Motor neuron (in vitro differentiated cells): ENCODE measurements at regions of chr2 and their contacts with region 1.

Region 1: DNA sequence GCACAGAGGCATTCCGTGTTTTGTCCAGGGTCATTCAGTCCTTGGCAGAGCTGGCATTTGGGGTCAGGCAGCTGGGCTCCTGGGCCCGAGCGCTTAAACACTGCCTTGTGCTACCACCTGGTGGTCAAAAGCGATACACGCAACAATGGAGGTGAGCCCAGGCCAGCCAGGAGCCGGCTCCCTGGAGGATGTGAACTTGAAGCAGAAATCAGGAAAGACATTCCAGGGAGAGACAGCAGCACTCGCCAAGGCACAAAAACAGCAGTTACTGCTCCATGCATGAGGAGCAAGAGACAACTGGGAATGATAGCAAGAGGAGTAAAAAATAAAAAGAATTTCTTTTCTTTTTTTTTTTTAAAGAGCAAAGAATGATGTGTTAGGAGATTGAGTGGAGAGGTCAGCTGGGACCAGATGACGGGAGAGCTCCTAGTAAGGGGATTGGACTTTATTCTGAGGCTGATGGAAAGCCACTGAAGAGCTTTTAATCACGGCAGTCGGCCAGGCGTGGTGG is 20.7 kb downstream of the SCYGR8 start:
- ATAC-seq: peak; percentile 91 to 100 (median 94)
- H3K4me3 ChIP-seq: no peak overlapping the region
- H3K27ac ChIP-seq: no peak overlapping the region
- H3K4me1 ChIP-seq: no peaks in the 10 kb centered on the region

Region 2: GRCh38 chr2:227125506-227125905 is 640.9 kb before region 1 on chr2:
- in situ Hi-C with region 1: loop called in 4 of 9 experiments (anchors 25 kb)
- ATAC-seq: no peak
- H3K4me3 ChIP-seq: no peak overlapping the region
- H3K27ac ChIP-seq: no peak overlapping the region
- H3K4me1 ChIP-seq: no peaks in the 10 kb centered on the region

Region 3: DNA sequence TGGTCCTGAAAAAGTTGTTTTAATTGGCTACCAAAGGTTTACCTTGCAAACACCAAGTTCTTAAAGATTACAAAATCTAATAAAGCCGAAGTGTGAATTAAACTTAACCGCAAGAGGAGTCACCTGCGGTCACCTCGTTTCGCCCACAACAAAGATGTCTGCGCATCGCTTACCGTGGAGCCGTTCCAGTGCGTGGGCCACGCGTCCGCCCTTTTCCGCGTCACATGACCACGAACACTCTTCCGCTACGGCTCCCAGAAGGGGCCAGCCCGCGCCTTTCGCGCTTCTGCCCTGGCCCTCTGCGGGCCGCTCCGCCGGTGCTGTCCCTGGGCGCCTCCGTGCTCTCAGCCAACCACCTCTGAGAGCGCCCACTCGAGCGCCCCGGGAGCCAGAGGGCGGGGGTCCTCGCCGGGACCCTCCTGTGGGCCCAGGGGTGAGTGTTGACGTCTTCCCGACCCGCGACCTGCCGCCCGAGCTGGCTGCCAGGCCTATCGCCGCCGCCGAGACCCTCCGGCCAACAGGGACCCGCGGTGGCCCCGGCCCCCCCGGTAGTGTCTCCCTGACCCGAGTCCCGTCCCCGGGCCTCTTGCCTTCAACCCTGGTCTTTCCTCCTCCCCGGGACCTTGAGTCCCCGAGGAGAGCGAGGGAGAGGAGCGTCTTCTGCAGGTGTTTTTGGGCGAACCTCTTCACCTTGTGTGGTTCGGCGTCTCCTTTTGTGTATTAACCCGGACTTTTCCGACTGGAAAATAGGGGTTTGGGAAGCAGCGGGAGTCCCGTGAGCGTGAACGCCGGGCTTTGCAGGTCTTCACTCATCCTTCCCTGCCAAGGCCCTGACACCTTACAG is 441.2 kb before region 1 on chr2 and contains the start of gene MFF:
- in situ Hi-C with region 1: no loop called
- ATAC-seq: peak; percentile 94 to 99 (median 97)
- H3K4me3 ChIP-seq: peak within 1 kb of the TSS; percentile 74 to 99 (median 85)
- H3K27ac ChIP-seq: peak within 1 kb of the TSS; percentile 92 to 98
- H3K4me1 ChIP-seq: peaks cover 8 to 27% of the 10 kb centered on the region in 2 donors
- total RNA-seq, gene MFF: 74.7 to 112 (median 98.4) TPM

Region 4: DNA sequence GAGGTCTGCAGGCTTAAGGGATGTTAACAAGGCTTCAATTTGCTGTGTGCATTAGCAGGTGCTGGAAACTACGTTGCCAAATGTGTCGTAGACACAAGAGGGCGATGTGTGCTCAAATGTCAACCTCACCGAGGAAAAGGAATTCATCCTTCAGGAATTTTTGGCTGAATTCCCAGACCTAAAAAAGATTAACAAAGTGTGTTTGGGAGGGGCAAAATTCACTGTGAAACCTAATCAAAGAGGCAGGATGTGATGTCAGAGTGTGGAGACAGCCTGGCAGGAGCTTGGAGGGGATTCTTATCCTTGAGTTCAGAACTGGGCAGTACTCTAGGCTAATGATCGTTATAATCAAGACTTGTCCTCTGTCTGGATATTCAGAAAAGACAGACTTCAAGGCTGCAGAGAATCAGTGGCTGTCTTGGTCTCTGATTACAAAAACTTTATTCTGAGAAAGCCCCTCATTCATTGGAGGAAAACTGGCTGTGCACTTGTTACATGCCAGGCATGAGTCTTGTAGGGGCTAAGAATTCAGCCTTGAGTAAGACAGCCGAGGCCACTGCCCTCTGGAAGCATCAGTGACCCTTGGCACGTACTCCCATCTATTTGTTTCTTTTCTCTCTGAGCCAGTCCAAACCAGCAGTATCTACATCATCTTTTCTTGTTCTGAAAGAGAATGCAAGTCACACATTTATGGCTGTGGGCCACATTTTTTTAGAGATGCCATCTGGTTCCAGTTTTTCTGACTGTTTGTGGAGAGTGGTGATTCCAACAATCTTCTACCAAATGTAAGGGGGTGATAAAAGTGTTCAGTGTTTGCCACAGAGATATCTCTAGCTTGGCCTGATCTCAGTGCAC is 360.0 kb before region 1 on chr2:
- in situ Hi-C with region 1: loop called in 6 of 9 experiments (anchors 25 kb)
- ATAC-seq: peak; percentile 63 to 96 (median 90)
- H3K4me3 ChIP-seq: no peak overlapping the region
- H3K27ac ChIP-seq: no peak overlapping the region
- H3K4me1 ChIP-seq: peaks cover 7 to 8% of the 10 kb centered on the region in 2 donors

Region 5: GRCh38 chr2:227479865-227480475 is 286.5 kb before region 1 on chr2:
- in situ Hi-C with region 1: loop called in 1 of 9 experiments (anchors 25 kb)
- ATAC-seq: peak in 4 of 8 experiments; percentile 33 to 85 (median 78)
- H3K4me3 ChIP-seq: no peak overlapping the region
- H3K27ac ChIP-seq: no peak overlapping the region
- H3K4me1 ChIP-seq: peaks cover 0 to under 1% of the 10 kb centered on the region in 2 donors

Region 6: DNA sequence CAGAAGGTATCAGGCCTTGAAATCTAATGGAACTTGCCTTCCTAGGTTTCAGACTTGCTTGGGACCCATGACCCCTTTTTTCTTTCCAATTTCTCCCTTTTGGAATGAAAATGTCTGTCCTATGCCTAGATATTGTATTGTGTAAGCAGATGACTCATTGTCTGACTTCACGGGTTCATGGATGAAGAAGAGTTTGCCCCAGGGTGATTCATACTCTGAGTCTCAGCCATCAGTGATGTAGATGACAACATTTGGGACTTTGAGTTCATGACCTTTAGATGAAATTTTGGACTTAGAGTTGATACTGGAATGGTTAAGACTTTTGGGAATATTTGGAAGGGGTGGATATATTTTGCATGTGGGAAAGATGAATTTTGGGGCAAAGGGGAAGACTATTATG is 111.0 kb before region 1 on chr2:
- in situ Hi-C with region 1: loop called in 4 of 9 experiments (anchors 5 to 25 kb)
- ATAC-seq: peak in 4 of 8 experiments; percentile 64 to 84 (median 75)
- H3K4me3 ChIP-seq: no peak overlapping the region
- H3K27ac ChIP-seq: no peak overlapping the region
- H3K4me1 ChIP-seq: peaks cover 0 to 8% of the 10 kb centered on the region in 2 donors

Region 7: GRCh38 chr2:227661019-227661649 is 105.3 kb before region 1 on chr2:
- in situ Hi-C with region 1: loop called in 4 of 9 experiments (anchors 5 to 25 kb)
- ATAC-seq: peak in 5 of 8 experiments; percentile 81 to 93 (median 83)
- H3K4me3 ChIP-seq: no peak overlapping the region
- H3K27ac ChIP-seq: no peak overlapping the region
- H3K4me1 ChIP-seq: peaks cover 10 to 11% of the 10 kb centered on the region in 2 donors

Region 8: DNA sequence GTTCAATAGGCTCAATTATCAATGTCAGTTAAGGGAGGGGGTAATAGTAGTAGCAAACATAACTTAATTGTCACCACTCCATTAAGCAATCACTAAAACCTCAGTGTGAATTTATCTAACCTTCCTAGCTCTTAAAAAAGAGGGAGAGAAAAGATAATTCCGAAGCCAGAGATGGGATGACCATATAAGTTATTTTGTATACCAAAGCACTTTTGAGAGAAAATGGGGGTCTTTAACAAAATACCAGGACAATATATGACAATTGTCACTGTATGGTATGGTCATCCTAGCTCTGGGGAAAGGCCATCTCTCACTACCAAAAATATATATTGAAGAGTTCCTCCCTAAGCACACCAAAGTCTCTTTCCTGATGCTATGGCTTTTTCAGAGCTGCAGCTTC is 360.0 kb after region 1 on chr2:
- in situ Hi-C with region 1: no loop called
- ATAC-seq: no peak
- H3K4me3 ChIP-seq: no peak overlapping the region
- H3K27ac ChIP-seq: no peak overlapping the region
- H3K4me1 ChIP-seq: no peaks in the 10 kb centered on the region